Naive thymus-derived CD4-positive, alpha-beta T cell (primary cell): ENCODE measurements at regions of chr10 and their contacts with region 1.

Region 1: GRCh38 chr10:72285972-72286521 is 12.3 kb downstream of the DDIT4 start:
- DNase-seq: no peak
- ATAC-seq: no peak
- H3K4me3 ChIP-seq: no peak overlapping the region
- H3K4me3 Mint-ChIP-seq: peak overlapping the region in 5 of 10 donors; percentile 25 to 72 (median 63)
- H3K27ac ChIP-seq: peak overlapping the region; percentile 35
- H3K27ac Mint-ChIP-seq: peak overlapping the region; percentile 27 to 91 (median 81)
- H3K4me1 ChIP-seq: peaks cover 12 to 27% of the 10 kb centered on the region in 2 donors
- H3K4me1 Mint-ChIP-seq: peaks cover 24 to 50% (median 42%) of the 10 kb centered on the region in 7 donors
- H3K27me3 ChIP-seq: no peaks in the 10 kb centered on the region
- H3K27me3 Mint-ChIP-seq: no peaks in the 10 kb centered on the region

Region 2: DNA sequence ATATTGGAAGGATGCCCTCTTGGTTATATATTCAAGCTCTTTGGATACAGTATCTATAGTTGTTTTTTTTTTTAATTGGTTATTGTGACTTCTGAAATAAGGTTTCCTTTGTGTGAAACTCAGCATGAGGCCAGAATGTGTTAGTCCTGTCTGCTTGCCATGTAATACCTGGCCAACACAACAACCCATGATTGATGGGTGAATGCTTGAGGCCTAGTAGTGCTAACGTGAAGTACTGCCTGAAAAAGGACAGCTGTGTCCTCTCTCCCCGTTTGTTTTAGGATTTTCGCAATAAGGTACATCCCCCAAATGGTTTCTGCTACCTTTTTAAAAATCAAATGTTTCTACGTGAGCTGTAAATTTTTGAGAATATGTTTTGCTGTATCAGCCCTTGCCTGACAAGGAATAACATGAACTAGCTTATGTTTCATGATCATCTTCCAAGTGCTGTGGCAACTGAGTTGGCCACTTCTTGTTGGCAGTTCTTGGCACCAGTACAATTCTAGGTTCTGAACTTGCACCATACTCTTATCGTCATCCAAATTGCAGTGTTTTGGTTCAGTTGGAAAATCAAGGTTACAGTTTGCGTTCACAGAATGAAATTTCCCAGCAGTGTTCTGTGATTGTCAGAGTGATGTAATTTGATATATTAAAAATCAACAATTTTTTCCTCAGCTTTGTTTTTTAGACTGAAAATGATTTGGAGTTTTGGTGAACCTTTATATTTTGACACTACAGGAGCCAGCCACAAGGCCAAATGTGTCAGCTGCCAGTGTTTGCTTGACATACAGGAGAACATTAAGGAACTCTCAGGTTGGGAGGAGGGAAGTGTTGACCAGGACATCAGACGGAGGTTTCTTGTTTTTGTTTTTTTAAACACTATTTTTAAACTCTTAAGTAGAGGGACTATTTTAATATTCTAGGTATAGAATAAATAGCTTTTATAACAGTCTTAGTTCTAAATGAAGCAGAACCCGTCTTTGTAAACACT is 56.5 kb before region 1 on chr10:
- CTCF ChIA-PET with region 1: no interaction called
- POLR2A ChIA-PET with region 1: no interaction called
- intact Hi-C with region 1: no loop called
- DNase-seq: no peak
- ATAC-seq: no peak
- H3K4me3 ChIP-seq: no peak overlapping the region
- H3K4me3 Mint-ChIP-seq: peak overlapping the region in 6 of 10 donors; percentile 1 to 52 (median 44)
- H3K27ac ChIP-seq: peak overlapping the region; percentile 42
- H3K27ac Mint-ChIP-seq: peak overlapping the region; percentile 3 to 86 (median 72)
- H3K4me1 ChIP-seq: peaks cover 10 to 36% of the 10 kb centered on the region in 2 donors
- H3K4me1 Mint-ChIP-seq: peaks cover 28 to 52% (median 48%) of the 10 kb centered on the region in 7 donors
- H3K27me3 ChIP-seq: no peaks in the 10 kb centered on the region
- H3K27me3 Mint-ChIP-seq: no peaks in the 10 kb centered on the region

Region 3: GRCh38 chr10:72254813-72255568 is 31.1 kb before region 1 on chr10:
- CTCF ChIA-PET with region 1: interaction called, 4 read pairs
- POLR2A ChIA-PET with region 1: interaction called, 14 read pairs
- intact Hi-C with region 1: no loop called
- DNase-seq: peak in 5 of 9 donors; percentile 37 to 53 (median 46)
- ATAC-seq: peak; percentile 75
- H3K4me3 ChIP-seq: peak overlapping the region; percentile 5
- H3K4me3 Mint-ChIP-seq: peak overlapping the region; percentile 64 to 91 (median 84)
- H3K27ac ChIP-seq: peak overlapping the region; percentile 69
- H3K27ac Mint-ChIP-seq: peak overlapping the region; percentile 84 to 98 (median 95)
- H3K4me1 ChIP-seq: peaks cover 30 to 82% of the 10 kb centered on the region in 2 donors
- H3K4me1 Mint-ChIP-seq: peaks cover 55 to 90% (median 72%) of the 10 kb centered on the region in 7 donors
- H3K27me3 ChIP-seq: no peaks in the 10 kb centered on the region
- H3K27me3 Mint-ChIP-seq: no peaks in the 10 kb centered on the region